Activated naive CD4-positive, alpha-beta T cell treated with anti-CD3 and anti-CD28 coated beads for 36 hours (primary cell): ENCODE measurements at regions of chr2 and their contacts with region 1.

Region 1: GRCh38 chr2:157657101-157657500 is 28.4 kb upstream of the ACVR1C start:
- DNase-seq: no peak
- H3K4me3 Mint-ChIP-seq: no peak overlapping the region
- H3K27ac Mint-ChIP-seq: no peak overlapping the region
- H3K4me1 Mint-ChIP-seq: no peaks in the 10 kb centered on the region
- H3K27me3 Mint-ChIP-seq: no peaks in the 10 kb centered on the region

Region 2: DNA sequence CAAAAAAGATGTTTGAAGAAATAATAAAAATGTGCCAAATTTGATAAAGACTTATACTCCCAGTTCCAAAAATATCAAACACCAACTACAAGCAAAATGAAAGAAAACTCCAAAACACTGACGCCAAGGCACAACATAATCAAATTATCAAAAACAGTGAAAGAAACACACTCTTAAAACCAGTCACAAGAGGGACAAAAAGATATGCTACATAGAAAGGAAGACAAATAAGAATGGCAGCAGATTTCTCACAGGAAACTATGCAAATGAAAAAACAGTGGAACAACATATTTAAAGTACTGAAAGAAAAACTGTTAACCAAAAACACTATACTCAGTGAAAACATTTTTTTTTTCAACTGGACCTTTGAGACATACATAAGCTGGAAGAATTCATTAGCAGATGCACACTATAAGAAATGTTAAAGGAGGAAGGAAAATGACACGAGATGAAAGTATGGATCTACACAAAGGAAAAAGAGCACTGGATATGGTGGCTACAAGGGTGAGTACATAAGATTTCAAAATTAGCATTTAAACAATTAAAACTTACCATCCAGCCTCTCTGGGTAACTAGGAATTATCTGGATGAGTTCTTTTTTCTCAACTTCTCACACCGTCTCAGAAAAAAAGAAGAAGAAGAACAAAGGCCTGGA is 65.6 kb after region 1 on chr2:
- CTCF ChIA-PET with region 1: no interaction called
- intact Hi-C with region 1: loop called (anchors 5 kb)
- DNase-seq: no peak
- H3K4me3 Mint-ChIP-seq: no peak overlapping the region
- H3K27ac Mint-ChIP-seq: no peak overlapping the region
- H3K4me1 Mint-ChIP-seq: no peaks in the 10 kb centered on the region
- H3K27me3 Mint-ChIP-seq: no peaks in the 10 kb centered on the region